GM12878 (cell line): ENCODE measurements at regions of chr1 and their contacts with region 1.

Region 1: DNA sequence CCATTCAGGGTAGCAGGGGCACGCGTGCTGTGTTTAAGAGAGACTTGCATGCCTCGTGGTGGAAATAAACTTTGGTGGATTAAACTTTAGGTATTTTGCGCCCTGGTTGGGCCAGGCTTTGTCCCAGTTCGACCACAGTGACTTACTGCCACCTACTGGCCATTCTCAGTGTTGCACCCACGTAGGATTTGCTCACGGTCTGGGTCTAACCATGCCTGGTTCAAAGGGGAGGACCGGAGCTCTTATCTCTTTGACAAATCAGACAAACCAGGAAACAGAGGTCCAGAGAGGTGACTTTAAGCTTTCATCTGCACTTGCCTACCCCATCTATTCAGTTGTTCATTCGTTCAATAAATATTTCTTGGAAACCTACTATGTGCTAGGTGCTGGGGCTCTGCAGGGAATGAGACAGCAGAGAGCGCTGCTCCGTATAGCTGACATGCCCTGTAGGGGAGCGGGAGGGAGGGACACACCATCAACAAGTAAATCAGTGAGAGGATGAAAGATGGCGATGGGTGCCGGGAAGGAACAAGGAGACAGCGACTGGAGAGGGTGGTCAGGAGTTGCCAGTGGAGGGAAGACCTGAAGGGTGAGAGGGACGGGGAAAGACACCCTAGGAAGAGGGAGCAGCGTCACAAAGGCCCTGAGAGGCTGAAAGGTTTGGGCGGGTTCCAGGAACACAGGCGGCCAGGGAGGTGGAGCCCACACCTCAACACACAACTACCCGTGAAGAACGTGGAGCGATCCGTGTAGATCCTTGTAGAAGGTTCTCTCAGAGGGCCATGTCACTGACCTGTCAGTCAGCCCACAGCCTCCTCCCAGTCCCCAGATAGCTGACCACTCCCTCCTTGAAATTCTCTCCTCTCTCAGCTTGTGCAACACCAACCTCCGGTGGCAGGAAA is 27.2 kb upstream of the TINAGL1 start:
- DNase-seq: peak; percentile 91
- ATAC-seq: peak; percentile 91
- H3K4me3 ChIP-seq: peak overlapping the region; percentile 23; the same call in 1 of the 2 replicates
- H3K27ac ChIP-seq: peak overlapping the region; percentile 33; the same call in 1 of the 2 replicates
- H3K4me1 ChIP-seq: peaks cover 14% of the 10 kb centered on the region
- H3K27me3 ChIP-seq: no peaks in the 10 kb centered on the region
- CTCF ChIP-seq: peak; percentile 80 to 98 (median 92)
- EP300 ChIP-seq: no peak
- POLR2A ChIP-seq: peak; percentile 38; the same call in 1 of the 2 replicates
- RAD21 ChIP-seq: peak; percentile 87

Region 2: DNA sequence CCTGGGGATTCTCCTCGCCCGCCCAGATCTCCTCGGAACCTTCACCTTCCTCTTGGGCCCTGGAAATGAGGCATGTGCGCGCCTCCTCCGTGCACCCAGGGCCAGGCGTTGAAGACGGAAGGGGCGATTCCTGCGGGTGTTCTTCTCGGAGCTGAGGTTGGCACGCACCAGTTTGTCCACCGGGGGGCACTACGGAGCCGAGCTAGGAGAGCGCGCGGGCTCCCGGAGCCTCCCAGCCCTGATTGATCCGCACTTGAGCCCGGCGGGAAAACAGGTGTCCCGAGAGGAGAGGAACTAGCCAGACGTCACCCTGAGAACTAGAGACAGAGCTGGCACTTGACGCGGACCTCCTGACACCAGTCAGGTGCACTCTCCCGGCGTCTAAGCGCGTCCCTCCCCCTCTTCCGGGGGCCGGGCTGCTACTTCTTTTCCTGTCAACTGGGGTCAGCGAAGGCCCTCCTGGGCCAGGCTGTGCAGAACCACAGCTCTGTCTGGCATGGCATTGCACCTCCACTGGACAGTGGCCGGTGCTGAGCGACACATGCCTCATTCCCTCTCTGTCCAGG is 154.4 kb before region 1 on chr1:
- CTCF ChIA-PET with region 1: interaction called, 85 read pairs
- POLR2A ChIA-PET with region 1: interaction called, 6 read pairs
- RAD21 ChIA-PET with region 1: interaction called, 48 read pairs
- SMC1A ChIA-PET with region 1: interaction called, 49 read pairs
- in situ Hi-C with region 1: no loop called
- intact Hi-C with region 1: loop called (anchors 1 kb)
- DNase-seq: peak; percentile 21
- ATAC-seq: peak; percentile 98
- H3K4me3 ChIP-seq: peak overlapping the region; percentile 50; the same call in 1 of the 2 replicates
- H3K27ac ChIP-seq: no peak overlapping the region
- H3K4me1 ChIP-seq: peaks cover 2% of the 10 kb centered on the region
- H3K27me3 ChIP-seq: no peaks in the 10 kb centered on the region; a peak in 1 of 4 replicates
- CTCF ChIP-seq: peak; percentile 82 to 92 (median 83)
- EP300 ChIP-seq: peak in 1 of 2 experiments; percentile 10; a peak in 1 of 4 replicates
- POLR2A ChIP-seq: no peak
- RAD21 ChIP-seq: peak; percentile 72

Region 3: DNA sequence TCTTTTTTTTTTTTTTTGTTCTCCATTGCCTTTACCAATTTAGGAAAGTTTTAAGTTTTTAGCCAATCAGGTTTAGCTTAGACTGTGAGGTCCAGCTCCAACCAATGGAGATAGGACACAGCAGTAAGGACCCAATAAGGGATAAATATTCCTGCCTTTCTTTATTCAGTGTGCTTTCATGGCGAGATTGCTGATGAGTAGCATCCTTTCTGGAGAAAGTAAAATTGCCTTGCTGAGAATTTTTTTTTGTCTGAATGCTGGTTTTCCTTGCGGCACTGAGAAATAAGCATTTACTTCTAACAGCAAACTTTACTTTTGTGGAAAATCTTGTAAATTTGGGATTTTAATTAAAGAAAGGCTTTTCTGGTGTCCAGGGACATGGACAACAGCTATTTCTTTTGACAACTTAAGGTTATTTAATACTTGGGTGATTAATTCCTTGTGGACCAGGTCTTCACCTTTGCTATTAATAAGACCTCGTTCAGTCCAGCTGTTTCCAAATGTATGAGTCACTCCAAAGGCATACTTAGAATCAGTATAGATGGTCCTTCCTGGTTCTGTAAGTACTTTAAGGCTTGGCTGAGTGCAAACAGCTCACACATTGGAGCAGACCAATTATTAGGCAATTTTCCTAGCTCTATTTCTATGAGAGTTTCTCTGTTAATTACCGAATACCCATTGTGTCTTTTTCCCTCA is 82.0 kb before region 1 on chr1:
- CTCF ChIA-PET with region 1: interaction called, 55 read pairs
- POLR2A ChIA-PET with region 1: interaction called, 4 read pairs
- RAD21 ChIA-PET with region 1: interaction called, 35 read pairs
- SMC1A ChIA-PET with region 1: interaction called, 36 read pairs
- in situ Hi-C with region 1: no loop called
- intact Hi-C with region 1: loop called (anchors 5 kb)
- DNase-seq: no peak
- ATAC-seq: no peak
- H3K4me3 ChIP-seq: no peak overlapping the region
- H3K27ac ChIP-seq: no peak overlapping the region
- H3K4me1 ChIP-seq: no peaks in the 10 kb centered on the region
- H3K27me3 ChIP-seq: no peaks in the 10 kb centered on the region
- CTCF ChIP-seq: no peak
- EP300 ChIP-seq: no peak
- POLR2A ChIP-seq: no peak
- RAD21 ChIP-seq: no peak

Region 4: GRCh38 chr1:31523769-31524168 is 25.4 kb before region 1 on chr1:
- CTCF ChIA-PET with region 1: interaction called, 12 read pairs
- POLR2A ChIA-PET with region 1: interaction called, 4 read pairs
- RAD21 ChIA-PET with region 1: interaction called, 12 read pairs
- SMC1A ChIA-PET with region 1: interaction called, 13 read pairs
- in situ Hi-C with region 1: no loop called
- intact Hi-C with region 1: no loop called
- DNase-seq: no peak
- ATAC-seq: peak; percentile 79
- H3K4me3 ChIP-seq: no peak overlapping the region
- H3K27ac ChIP-seq: no peak overlapping the region
- H3K4me1 ChIP-seq: no peaks in the 10 kb centered on the region
- H3K27me3 ChIP-seq: no peaks in the 10 kb centered on the region
- CTCF ChIP-seq: no peak
- EP300 ChIP-seq: no peak
- POLR2A ChIP-seq: no peak
- RAD21 ChIP-seq: no peak

Region 5: DNA sequence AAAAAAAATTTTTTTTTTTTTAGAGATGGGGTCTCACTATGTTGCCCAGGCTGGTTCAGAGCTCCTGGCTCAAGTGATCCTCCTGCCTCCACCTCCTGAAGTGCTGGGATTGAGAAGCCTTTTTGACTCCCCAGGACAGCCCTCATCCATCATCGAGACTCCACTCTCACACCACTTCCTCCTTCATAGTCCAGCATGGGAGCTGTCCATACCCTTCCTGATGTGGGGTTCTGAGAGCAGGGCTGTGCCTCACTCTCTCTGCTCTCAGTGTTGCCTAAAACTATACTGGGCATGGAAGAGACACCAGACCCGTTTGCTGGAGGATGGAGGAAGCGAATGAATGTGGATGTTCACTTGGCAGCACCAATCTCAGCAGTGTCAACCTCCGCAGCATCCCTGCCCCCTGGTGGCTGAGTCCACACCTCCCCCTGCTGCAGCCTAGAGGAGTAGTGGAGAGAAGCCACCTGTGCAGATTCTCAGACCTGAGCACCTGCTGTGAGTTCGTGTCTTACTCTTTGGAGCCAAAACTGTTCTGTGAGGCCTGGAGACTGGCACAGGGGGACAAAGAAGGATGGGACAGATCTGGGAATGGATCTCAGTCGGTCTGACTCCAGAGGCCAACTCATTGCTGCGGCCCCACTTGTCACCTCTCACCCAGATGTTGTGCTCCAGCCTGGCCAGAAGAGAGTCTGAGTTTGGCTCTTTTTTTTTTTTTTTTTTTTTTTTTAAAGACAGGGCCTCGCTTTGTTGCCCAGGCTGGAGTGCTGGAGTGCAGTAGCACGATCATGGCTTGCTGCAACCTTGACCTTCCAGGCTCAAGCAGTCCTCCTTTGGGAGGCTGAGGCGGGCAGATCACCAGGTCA is 44.8 kb after region 1 on chr1:
- CTCF ChIA-PET with region 1: interaction called, 30 read pairs
- POLR2A ChIA-PET with region 1: no interaction called
- RAD21 ChIA-PET with region 1: interaction called, 13 read pairs
- SMC1A ChIA-PET with region 1: interaction called, 16 read pairs
- in situ Hi-C with region 1: no loop called
- intact Hi-C with region 1: no loop called
- DNase-seq: peak; percentile 26
- ATAC-seq: peak; percentile 100
- H3K4me3 ChIP-seq: no peak overlapping the region
- H3K27ac ChIP-seq: no peak overlapping the region
- H3K4me1 ChIP-seq: no peaks in the 10 kb centered on the region; the same call in 1 of the 2 replicates
- H3K27me3 ChIP-seq: no peaks in the 10 kb centered on the region
- CTCF ChIP-seq: peak; percentile 90 to 97 (median 97)
- EP300 ChIP-seq: no peak
- POLR2A ChIP-seq: no peak
- RAD21 ChIP-seq: peak; percentile 67